ENCODE measurements at regions of chr12 and their contacts with region 1.

Region 1: DNA sequence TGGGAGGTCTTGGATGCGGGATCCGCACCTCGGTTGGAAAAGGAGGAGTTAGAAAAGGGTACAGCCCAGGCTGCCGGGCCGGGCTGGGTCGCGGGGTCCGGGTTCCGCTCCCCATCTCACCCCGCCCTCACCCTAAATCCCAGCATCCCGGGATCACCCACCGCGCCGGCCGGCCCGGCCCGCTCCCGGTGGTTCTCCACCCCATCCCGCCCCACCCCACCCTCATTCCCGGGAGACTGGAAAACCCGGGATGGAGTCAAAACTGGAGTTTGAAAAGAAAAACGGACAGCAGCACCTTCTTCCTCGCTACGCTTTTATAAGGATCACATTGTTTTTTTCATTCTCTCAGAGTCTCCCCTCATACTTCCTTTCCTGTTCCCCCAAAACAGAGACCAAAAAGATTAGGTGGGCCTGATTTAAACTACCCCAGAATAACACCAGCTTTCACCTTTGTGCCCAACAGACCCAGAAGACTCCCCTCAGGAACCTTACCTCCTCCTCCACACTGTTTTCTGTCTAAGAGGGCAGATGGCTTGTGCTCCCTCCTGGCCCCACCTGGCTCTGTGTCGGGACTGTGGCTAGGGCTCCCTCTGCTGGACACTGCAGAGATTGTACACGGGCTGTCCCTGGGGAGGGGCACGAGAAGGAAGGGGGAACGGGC is 2.8 kb downstream of the GLI1 start:
- DNase-seq: peak; percentile 37
- H3K4me3 ChIP-seq: peak overlapping the region; percentile 67
- H3K27me3 ChIP-seq: no peaks in the 10 kb centered on the region
- CTCF ChIP-seq: peak; percentile 98

Region 2: GRCh38 chr12:57309420-57309819 is 153.0 kb before region 1 on chr12:
- CTCF ChIA-PET with region 1: interaction called, 411 read pairs
- POLR2A ChIA-PET with region 1: interaction called, 6 read pairs
- DNase-seq: peak; percentile 7
- H3K4me3 ChIP-seq: no peak overlapping the region
- H3K27me3 ChIP-seq: no peaks in the 10 kb centered on the region
- CTCF ChIP-seq: no peak

Region 3: GRCh38 chr12:57476162-57476992 is 14.0 kb after region 1 on chr12:
- CTCF ChIA-PET with region 1: interaction called, 38 read pairs
- POLR2A ChIA-PET with region 1: no interaction called
- DNase-seq: no peak
- H3K4me3 ChIP-seq: peak overlapping the region; percentile 18; the same call in 1 of the 2 replicates
- H3K27me3 ChIP-seq: peaks cover 41% of the 10 kb centered on the region
- CTCF ChIP-seq: peak; percentile 22; the same call in 1 of the 2 replicates

Region 4: GRCh38 chr12:57485695-57486094 is 23.3 kb after region 1 on chr12:
- CTCF ChIA-PET with region 1: interaction called, 21 read pairs
- POLR2A ChIA-PET with region 1: no interaction called
- DNase-seq: no peak
- H3K4me3 ChIP-seq: no peak overlapping the region
- H3K27me3 ChIP-seq: no peaks in the 10 kb centered on the region
- CTCF ChIP-seq: no peak

Region 5: GRCh38 chr12:57522887-57523705 is 60.7 kb after region 1 on chr12:
- CTCF ChIA-PET with region 1: interaction called, 10 read pairs
- POLR2A ChIA-PET with region 1: no interaction called
- DNase-seq: no peak
- H3K4me3 ChIP-seq: peak overlapping the region; percentile 77
- H3K27me3 ChIP-seq: no peaks in the 10 kb centered on the region
- CTCF ChIP-seq: no peak

Region 6: GRCh38 chr12:57632694-57633477 is 170.5 kb after region 1 on chr12 and contains the start of gene B4GALNT1:
- CTCF ChIA-PET with region 1: interaction called, 11 read pairs
- POLR2A ChIA-PET with region 1: no interaction called
- DNase-seq: no peak
- H3K4me3 ChIP-seq: peak within 1 kb of the TSS; percentile 49
- H3K27me3 ChIP-seq: peaks cover 16% of the 10 kb centered on the region
- CTCF ChIP-seq: peak; percentile 87
- polyA plus RNA-seq, gene B4GALNT1: 1.2 and 2.7 TPM in 2 replicates

Measured in BJ (cell line).